ENCODE measurements at regions of chr1 and their contacts with region 1.

Region 1: DNA sequence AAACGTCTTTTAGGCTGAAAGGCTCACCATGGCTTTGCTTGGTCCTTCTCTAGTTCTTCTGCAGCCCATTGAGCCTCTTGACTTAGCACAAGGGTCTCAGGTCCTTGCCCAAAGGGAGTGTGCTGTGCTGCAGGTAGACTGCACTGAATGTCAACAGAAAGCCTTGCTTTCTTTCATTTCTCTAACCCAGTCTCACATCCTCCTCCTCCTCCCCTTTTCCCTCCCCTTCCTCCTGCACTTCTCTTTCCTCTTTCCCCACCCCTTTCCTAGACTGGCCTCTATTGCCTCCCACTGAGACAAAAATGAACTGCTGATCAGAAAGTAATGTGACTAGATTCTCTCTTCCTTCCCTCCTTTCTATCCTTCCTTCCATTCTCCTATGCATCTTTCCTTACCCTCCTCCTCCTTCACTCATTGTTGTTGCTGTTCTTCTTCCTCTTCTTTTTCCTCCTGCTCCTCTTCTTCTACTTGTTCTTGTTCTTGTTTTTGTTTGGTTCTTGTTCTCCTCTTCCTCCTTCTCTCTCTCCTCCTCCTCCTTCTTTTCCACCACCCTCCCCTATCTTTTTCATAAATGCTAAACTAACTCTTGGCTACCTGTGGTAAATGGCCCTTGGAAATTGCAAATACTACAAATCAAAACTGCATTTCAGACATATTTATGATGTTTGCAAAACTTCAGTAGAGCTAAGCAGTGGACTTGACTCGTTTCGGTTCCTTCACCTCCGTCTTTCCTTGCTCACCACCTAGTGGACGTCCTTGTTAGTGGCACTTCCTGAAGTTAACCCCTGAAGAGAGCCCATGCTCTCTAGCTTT is at the start of gene SELL:
- DNase-seq: peak; percentile 89
- ATAC-seq: peak; percentile 80
- H3K4me3 Mint-ChIP-seq: peak within 1 kb of the TSS; percentile 81
- H3K27ac Mint-ChIP-seq: peak within 1 kb of the TSS; percentile 90
- H3K4me1 Mint-ChIP-seq: peaks cover 29% of the 10 kb centered on the region
- H3K27me3 Mint-ChIP-seq: peaks cover 10% of the 10 kb centered on the region
- total RNA-seq, gene SELL: 192 to 222 TPM

Region 2: DNA sequence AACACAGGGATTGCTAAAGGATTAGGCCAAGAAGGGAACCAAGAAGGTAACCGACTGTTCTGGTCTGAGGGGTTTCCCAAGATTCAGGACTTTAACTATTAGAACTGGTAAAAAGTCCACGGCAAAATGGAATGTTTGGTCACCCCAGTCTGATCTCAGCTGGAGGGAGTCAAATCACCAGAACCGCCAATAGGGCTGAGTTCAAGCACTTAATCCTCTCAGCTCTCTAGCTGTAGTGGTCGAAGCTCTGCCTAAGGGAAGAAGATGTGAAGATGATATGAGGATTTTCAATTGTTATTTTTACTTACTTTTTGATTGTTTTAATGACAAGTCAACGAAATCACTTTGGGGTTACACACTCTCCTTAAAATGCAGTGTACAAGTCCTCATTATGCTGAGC is 154.5 kb before region 1 on chr1:
- CTCF ChIA-PET with region 1: interaction called, 39 read pairs
- POLR2A ChIA-PET with region 1: no interaction called
- DNase-seq: no peak
- ATAC-seq: no peak
- H3K4me3 Mint-ChIP-seq: no peak overlapping the region
- H3K27ac Mint-ChIP-seq: no peak overlapping the region
- H3K4me1 Mint-ChIP-seq: no peaks in the 10 kb centered on the region
- H3K27me3 Mint-ChIP-seq: no peaks in the 10 kb centered on the region

Region 3: DNA sequence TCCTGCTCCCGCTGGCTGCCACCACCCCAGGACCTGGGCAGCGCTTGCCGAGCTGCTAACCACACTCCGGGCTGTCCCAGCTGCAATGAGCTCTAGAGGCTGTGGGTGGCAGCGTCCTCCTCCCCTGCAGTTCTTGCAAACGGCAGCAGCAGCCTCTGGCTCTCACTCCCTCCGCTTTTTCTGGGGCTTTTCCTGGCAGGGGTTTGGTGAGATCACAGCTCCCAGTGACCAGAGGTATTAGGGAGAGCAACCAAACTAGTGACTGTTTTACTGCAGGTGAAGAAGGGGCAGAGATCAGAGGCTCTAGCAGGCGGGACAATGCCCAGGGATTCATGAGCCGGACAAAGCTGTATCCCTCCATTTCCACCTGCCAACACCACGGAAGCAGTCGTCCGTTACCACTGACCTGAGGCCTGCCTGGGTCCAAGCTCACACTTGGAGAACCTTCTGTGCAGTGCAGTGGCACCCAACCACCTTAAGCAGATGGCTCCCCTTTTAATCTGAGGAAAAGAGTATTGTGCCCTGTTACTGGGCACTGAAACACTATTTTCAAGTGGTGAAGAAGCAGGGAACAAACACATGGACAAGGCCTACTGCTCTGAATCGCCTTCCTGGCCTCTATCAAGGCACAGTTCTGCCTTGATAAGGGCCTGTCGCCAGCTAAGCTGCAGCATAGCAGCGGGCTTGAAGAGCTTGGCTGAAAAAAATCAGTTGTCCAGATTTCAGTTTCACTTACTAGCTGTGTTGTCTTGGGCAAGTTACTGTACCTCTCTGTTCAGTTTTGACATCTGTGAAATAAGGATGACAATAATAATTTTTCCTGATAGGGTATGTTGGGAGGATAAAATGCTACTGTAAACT is 125.0 kb before region 1 on chr1 and contains the start of gene F5:
- CTCF ChIA-PET with region 1: interaction called, 105 read pairs
- POLR2A ChIA-PET with region 1: interaction called, 8 read pairs
- DNase-seq: peak; percentile 86
- ATAC-seq: peak; percentile 100
- H3K4me3 Mint-ChIP-seq: peak within 1 kb of the TSS; percentile 78
- H3K27ac Mint-ChIP-seq: peak within 1 kb of the TSS; percentile 83
- H3K4me1 Mint-ChIP-seq: peaks cover 51% of the 10 kb centered on the region
- H3K27me3 Mint-ChIP-seq: no peaks in the 10 kb centered on the region
- total RNA-seq, gene F5: 1.4 to 1.6 TPM

Region 4: DNA sequence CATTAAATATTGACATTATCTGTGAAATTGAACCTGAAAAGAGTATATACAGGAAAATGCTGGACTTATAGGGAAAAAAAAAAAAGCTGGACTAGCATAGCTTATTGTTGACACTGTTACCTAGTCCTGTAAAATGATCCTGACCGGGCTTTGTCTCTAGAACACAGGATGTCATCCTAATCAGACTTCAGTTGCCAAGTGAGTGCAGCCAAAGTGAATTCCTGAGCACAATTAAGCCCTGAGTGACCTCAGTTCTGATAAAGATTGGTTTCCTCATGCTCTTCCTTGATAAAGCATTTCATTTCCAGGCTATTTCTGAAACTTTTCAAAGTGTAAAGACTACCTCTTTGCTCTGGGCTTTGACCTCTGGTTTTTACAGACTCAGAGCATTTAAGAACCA is 101.6 kb before region 1 on chr1:
- CTCF ChIA-PET with region 1: interaction called, 215 read pairs
- POLR2A ChIA-PET with region 1: no interaction called
- DNase-seq: no peak
- ATAC-seq: no peak
- H3K4me3 Mint-ChIP-seq: no peak overlapping the region
- H3K27ac Mint-ChIP-seq: no peak overlapping the region
- H3K4me1 Mint-ChIP-seq: peaks cover 14% of the 10 kb centered on the region
- H3K27me3 Mint-ChIP-seq: no peaks in the 10 kb centered on the region

Region 5: GRCh38 chr1:169694304-169695075 is 17.2 kb before region 1 on chr1:
- CTCF ChIA-PET with region 1: interaction called, 73 read pairs
- POLR2A ChIA-PET with region 1: interaction called, 94 read pairs
- DNase-seq: peak; percentile 72
- ATAC-seq: peak; percentile 73
- H3K4me3 Mint-ChIP-seq: peak overlapping the region; percentile 27
- H3K27ac Mint-ChIP-seq: peak overlapping the region; percentile 87
- H3K4me1 Mint-ChIP-seq: peaks cover 94% of the 10 kb centered on the region
- H3K27me3 Mint-ChIP-seq: no peaks in the 10 kb centered on the region

Region 6: DNA sequence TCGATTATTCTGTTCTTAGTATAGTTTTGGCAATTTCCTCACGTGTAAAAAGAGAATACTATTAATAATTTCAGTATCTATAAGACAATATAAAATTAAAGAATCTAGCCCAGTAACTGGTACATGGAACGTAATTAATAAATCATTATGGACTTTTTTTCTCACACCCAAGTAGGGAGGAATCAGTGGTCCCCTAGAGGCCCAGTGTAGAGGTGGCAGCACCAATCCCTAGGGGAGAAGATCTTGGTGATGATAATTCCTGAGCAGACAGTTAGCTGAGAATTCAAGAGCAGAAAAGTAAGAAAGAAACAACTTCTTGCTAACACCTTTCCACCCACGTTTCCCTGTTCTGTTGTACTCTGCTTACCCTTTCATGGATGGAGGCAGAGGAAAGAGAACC is 41.9 kb after region 1 on chr1:
- CTCF ChIA-PET with region 1: no interaction called
- POLR2A ChIA-PET with region 1: no interaction called
- DNase-seq: no peak
- ATAC-seq: no peak
- H3K4me3 Mint-ChIP-seq: no peak overlapping the region
- H3K27ac Mint-ChIP-seq: no peak overlapping the region
- H3K4me1 Mint-ChIP-seq: no peaks in the 10 kb centered on the region
- H3K27me3 Mint-ChIP-seq: peaks cover 11% of the 10 kb centered on the region

Region 7: DNA sequence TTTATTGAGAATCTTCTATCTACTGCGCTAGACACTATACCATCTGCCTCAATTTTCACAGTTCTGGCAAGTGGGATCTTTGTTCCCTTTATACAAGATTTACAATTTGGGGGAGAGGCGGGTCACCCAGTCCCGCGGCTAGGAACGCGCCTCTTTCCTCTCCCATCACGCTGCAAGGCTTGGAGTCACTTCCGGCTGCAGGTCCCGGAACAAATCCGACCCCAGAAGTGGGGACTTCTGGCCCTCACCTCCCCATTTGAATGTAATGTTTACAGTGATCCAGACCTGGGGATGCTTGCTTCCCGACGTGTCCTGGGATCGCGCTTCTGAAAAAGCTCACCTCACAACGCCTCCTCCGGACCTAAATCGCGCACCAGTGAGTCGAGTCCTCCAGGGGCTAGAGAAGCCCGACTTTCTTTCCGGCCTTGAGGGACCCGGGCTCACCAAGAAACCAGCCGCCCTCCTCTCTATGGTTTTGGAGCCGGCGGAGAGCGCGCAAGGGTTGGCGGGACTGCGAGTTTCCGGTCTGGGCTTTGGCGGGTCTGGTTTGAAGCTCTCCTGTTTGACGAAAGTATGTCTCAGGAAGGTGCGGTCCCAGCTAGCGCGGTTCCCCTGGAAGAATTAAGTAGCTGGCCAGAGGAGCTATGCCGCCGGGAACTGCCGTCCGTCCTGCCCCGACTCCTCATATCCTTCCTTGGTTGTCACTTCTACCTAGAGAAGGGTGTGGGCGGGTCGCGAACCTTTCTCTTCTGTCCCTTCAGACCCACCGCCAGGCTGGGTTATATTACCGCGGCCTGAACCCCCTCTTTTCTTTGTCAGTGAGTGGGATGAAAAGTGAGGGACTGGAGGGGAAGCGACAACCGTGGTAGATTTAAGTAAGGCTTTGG is 83.1 kb after region 1 on chr1 and contains the start of gene METTL18:
- CTCF ChIA-PET with region 1: interaction called, 13 read pairs
- POLR2A ChIA-PET with region 1: interaction called, 6 read pairs
- DNase-seq: peak; percentile 96
- ATAC-seq: peak; percentile 96
- H3K4me3 Mint-ChIP-seq: peak within 1 kb of the TSS; percentile 80
- H3K27ac Mint-ChIP-seq: peak within 1 kb of the TSS; percentile 85
- H3K4me1 Mint-ChIP-seq: peaks cover 54% of the 10 kb centered on the region
- H3K27me3 Mint-ChIP-seq: no peaks in the 10 kb centered on the region
- total RNA-seq, gene METTL18: 9.8 to 10.2 TPM